ENCODE measurements at regions of chr1 and their contacts with region 1.

Region 1: DNA sequence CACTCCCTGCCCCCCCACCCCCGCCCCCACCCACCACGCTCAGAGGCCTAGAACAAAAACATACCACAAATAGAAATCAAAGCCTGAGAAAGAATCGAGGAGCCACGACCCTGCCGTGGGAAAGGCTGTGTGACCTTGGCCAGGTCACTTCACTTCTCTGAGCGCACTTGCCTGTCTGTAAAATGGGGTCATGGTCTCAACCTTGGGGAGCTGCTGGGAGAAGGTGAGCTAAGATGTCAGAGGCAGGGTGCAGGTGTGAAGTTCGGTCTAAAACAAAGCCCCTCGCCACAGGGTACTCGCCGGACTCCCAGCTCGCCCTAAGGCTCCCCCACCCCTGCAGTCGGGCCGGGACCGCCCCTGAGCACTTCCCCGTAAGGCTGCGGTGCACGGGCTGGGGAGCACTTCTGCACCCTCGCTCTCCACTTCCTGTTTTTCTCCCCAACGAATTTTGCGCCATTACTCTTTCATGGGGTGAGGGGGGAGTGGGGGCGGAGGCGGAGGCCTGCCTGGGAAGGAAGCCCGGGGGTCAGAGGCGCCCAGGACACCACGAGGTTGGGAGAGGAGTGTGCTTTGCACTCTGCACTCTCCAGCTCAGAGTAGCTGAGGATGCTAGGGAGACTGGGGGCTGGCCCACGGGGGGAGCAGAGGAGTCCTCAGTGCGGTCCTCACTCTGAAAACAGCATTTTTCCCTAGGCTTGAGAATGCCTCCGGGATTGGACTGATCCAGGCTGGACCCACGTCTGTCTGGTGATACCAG is 21.9 kb upstream of the PIK3CD start:
- DNase-seq: no peak
- H3K4me3 ChIP-seq: no peak overlapping the region
- H3K27me3 ChIP-seq: no peaks in the 10 kb centered on the region
- CTCF ChIP-seq: no peak

Region 2: GRCh38 chr1:9249534-9250410 is 379.9 kb before region 1 on chr1:
- CTCF ChIA-PET with region 1: no interaction called
- POLR2A ChIA-PET with region 1: no interaction called
- DNase-seq: no peak
- H3K4me3 ChIP-seq: no peak overlapping the region
- H3K27me3 ChIP-seq: no peaks in the 10 kb centered on the region
- CTCF ChIP-seq: peak; percentile 64

Region 3: GRCh38 chr1:9529190-9529589 is 100.4 kb before region 1 on chr1:
- CTCF ChIA-PET with region 1: no interaction called
- POLR2A ChIA-PET with region 1: no interaction called
- DNase-seq: no peak
- H3K4me3 ChIP-seq: no peak overlapping the region
- H3K27me3 ChIP-seq: no peaks in the 10 kb centered on the region
- CTCF ChIP-seq: no peak

Region 4: DNA sequence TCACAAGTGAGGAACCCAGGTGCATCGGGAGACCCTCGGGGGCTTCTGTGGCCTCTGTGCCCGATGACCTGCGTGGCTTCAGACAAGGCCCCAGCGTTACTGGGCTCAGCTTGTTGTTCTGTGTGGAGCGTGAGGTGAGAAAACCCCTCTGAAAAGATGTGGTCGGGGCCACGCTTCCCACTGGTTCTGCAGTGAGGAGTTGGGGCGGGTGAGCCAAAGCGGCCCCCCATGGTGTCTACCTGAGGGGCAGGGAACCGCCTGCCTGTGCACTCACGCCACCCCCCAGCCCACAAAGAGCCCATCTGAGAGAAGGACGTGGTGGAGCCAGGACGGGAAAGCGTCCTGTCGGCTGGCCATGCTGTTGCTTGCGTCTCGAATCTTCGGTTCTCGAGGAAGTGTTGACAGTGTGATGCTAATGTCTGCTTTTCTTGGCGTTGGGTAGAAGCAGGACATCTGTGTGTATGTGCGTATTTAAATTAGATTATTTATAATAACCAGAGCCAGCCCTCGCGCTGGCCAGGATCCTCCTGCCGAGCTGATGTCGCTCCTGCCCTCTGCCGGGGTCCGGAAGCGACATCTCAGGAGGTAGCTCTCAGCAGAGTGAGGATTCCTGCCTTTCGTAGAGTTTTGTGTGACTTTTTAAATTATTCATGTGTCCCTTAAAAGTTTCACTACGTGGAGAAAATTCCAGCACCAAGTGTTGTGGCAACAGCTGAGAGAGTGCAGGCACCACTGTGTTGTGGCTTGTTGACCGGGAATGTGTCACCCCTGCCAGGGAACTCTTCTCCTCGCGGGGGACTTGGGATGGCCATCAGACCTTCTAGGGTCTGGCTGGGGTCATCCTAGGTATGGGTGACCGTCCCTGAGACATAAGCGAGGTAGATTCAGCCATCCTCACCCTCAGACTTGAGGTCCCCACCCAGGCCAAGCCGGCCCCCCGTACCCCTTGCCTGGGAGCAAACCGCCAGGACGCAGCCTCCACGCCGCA is 25.6 kb before region 1 on chr1:
- CTCF ChIA-PET with region 1: no interaction called
- POLR2A ChIA-PET with region 1: no interaction called
- DNase-seq: no peak
- H3K4me3 ChIP-seq: no peak overlapping the region
- H3K27me3 ChIP-seq: no peaks in the 10 kb centered on the region
- CTCF ChIP-seq: no peak

Region 5: GRCh38 chr1:9615316-9616063 is 14.1 kb before region 1 on chr1:
- CTCF ChIA-PET with region 1: interaction called, 27 read pairs
- POLR2A ChIA-PET with region 1: no interaction called
- DNase-seq: no peak
- H3K4me3 ChIP-seq: no peak overlapping the region
- H3K27me3 ChIP-seq: peaks cover 3% of the 10 kb centered on the region; the same call in 1 of the 2 replicates
- CTCF ChIP-seq: peak; percentile 89

Region 6: GRCh38 chr1:9701661-9702060 is 72.0 kb after region 1 on chr1:
- CTCF ChIA-PET with region 1: interaction called, 14 read pairs
- POLR2A ChIA-PET with region 1: no interaction called
- DNase-seq: no peak
- H3K4me3 ChIP-seq: no peak overlapping the region
- H3K27me3 ChIP-seq: no peaks in the 10 kb centered on the region
- CTCF ChIP-seq: no peak

Region 7: GRCh38 chr1:9724706-9725476 is 95.3 kb after region 1 on chr1:
- CTCF ChIA-PET with region 1: interaction called, 28 read pairs
- POLR2A ChIA-PET with region 1: interaction called, 4 read pairs
- DNase-seq: no peak
- H3K4me3 ChIP-seq: no peak overlapping the region
- H3K27me3 ChIP-seq: no peaks in the 10 kb centered on the region
- CTCF ChIP-seq: peak; percentile 92

Region 8: GRCh38 chr1:9792156-9793042 is 162.8 kb after region 1 on chr1:
- CTCF ChIA-PET with region 1: no interaction called
- POLR2A ChIA-PET with region 1: no interaction called
- DNase-seq: no peak
- H3K4me3 ChIP-seq: no peak overlapping the region
- H3K27me3 ChIP-seq: no peaks in the 10 kb centered on the region
- CTCF ChIP-seq: no peak

Region 9: GRCh38 chr1:9867408-9868243 is 238.0 kb after region 1 on chr1:
- CTCF ChIA-PET with region 1: interaction called, 50 read pairs
- POLR2A ChIA-PET with region 1: interaction called, 6 read pairs
- DNase-seq: no peak
- H3K4me3 ChIP-seq: no peak overlapping the region
- H3K27me3 ChIP-seq: no peaks in the 10 kb centered on the region
- CTCF ChIP-seq: peak; percentile 97

Measured in BJ (cell line).